OCI-LY7 (cell line): ENCODE measurements at regions of chr3 and their contacts with region 1.

Region 1: DNA sequence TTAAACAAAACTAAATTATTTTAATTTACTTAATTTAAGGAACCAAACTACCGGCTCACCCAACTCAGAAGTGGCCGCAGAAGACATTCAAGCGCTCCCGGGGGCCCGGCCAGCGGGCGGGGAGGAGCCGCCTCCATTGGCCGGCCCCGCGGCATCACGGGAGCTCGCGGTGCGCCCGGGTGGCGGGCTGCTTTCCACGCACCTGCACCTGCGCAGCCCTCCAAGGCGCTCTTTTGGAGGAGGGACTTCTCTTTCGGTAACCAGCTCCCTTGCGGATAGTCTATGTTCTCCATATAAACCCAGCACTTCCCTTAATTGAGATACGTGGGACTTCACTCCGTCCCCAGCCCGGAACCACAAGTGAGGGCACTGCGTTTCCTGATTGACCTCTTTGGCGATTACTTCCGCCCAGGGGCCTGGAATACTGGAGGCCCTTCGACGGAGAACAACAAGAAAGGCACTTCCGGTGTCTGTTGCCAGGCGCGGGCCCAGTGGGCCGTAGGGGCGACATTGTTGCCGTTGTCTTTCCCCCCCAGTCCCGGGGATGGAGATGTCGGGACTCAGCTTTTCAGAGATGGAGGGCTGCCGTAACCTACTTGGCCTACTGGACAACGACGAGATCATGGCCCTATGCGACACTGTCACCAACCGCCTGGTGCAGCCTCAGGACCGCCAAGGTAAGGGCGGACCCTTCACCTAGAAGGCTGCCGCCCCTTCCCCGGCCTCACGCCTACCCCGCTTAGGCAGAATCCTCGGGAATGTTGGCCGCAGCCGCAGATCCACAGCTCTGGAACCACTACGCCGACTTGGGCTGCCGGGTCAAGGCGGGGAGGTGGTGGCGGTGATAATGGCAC is at the start of gene C3orf38:
- DNase-seq: peak; percentile 88
- H3K4me3 ChIP-seq: peak within 1 kb of the TSS; percentile 99
- H3K27ac ChIP-seq: peak within 1 kb of the TSS; percentile 79
- H3K4me1 ChIP-seq: peaks cover 30% of the 10 kb centered on the region
- CTCF ChIP-seq: no peak
- total RNA-seq, gene C3orf38: 27.5 and 27.8 TPM in 2 replicates

Region 2: GRCh38 chr3:87227104-87227834 is 922.5 kb before region 1 on chr3 and contains the start of gene CHMP2B:
- CTCF ChIA-PET with region 1: no interaction called
- POLR2A ChIA-PET with region 1: no interaction called
- intact Hi-C with region 1: loop called (anchors 5 kb)
- DNase-seq: peak; percentile 93
- H3K4me3 ChIP-seq: peak within 1 kb of the TSS; percentile 98
- H3K27ac ChIP-seq: peak within 1 kb of the TSS; percentile 24
- H3K4me1 ChIP-seq: peaks cover 18% of the 10 kb centered on the region
- CTCF ChIP-seq: no peak
- total RNA-seq, gene CHMP2B: 11.5 and 17.5 TPM in 2 replicates

Region 3: DNA sequence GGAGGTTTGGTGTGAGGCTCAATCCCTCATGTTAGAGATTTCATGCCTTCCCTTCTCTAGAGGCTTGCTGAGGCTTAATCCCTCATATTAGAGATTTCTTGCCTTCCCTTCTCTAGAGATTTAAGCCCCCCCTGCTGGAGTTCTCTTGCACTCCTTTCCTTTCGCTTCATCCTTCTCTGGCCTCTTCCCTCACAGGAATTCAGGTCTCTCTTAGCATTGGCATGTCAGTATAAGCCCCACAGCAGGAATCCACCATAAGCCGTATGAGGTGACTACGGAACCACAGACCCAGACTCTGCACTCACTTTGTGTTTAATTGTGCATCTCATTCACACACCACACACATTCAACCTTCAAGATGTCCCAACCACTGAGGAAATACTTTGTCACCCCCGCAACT is 534.7 kb before region 1 on chr3:
- CTCF ChIA-PET with region 1: no interaction called
- POLR2A ChIA-PET with region 1: no interaction called
- intact Hi-C with region 1: no loop called
- DNase-seq: no peak
- H3K4me3 ChIP-seq: no peak overlapping the region
- H3K27ac ChIP-seq: no peak overlapping the region
- H3K4me1 ChIP-seq: no peaks in the 10 kb centered on the region
- CTCF ChIP-seq: no peak

Region 4: GRCh38 chr3:88058591-88059368 is 91.0 kb before region 1 on chr3 and contains the starts of genes CGGBP1 and ZNF654:
- CTCF ChIA-PET with region 1: no interaction called
- POLR2A ChIA-PET with region 1: interaction called, 20 read pairs
- intact Hi-C with region 1: loop called (anchors 1 kb)
- DNase-seq: peak; percentile 98
- H3K4me3 ChIP-seq: peak within 1 kb of the TSS; percentile 84
- H3K27ac ChIP-seq: peak within 1 kb of the TSS; percentile 68
- H3K4me1 ChIP-seq: peaks cover 29% of the 10 kb centered on the region
- CTCF ChIP-seq: no peak
- total RNA-seq, gene CGGBP1: 52.8 and 54.4 TPM in 2 replicates
- total RNA-seq, gene ZNF654: 5.4 and 5.6 TPM in 2 replicates

Region 5: DNA sequence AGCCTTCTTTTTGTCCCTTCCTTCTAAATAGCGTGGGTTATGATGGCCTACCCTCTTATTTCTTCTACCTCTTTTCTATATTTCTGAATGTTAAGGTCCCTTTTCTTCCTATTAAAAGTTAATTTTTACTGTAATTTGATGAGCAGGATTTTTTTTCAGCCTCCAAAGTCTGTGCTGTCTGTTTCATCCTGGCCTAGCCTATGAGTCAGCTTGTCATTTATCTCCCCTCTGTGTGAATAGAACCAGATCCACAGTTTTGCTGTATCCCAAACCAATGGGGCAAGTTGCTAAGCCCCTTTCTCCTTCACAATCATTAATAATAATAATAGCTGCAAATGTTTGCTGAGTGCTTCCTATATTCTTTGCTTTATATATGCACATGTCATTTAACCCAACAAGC is 18.0 kb before region 1 on chr3:
- CTCF ChIA-PET with region 1: no interaction called
- POLR2A ChIA-PET with region 1: interaction called, 13 read pairs
- intact Hi-C with region 1: no loop called
- DNase-seq: no peak
- H3K4me3 ChIP-seq: no peak overlapping the region
- H3K27ac ChIP-seq: no peak overlapping the region
- H3K4me1 ChIP-seq: no peaks in the 10 kb centered on the region
- CTCF ChIP-seq: no peak

Region 6: DNA sequence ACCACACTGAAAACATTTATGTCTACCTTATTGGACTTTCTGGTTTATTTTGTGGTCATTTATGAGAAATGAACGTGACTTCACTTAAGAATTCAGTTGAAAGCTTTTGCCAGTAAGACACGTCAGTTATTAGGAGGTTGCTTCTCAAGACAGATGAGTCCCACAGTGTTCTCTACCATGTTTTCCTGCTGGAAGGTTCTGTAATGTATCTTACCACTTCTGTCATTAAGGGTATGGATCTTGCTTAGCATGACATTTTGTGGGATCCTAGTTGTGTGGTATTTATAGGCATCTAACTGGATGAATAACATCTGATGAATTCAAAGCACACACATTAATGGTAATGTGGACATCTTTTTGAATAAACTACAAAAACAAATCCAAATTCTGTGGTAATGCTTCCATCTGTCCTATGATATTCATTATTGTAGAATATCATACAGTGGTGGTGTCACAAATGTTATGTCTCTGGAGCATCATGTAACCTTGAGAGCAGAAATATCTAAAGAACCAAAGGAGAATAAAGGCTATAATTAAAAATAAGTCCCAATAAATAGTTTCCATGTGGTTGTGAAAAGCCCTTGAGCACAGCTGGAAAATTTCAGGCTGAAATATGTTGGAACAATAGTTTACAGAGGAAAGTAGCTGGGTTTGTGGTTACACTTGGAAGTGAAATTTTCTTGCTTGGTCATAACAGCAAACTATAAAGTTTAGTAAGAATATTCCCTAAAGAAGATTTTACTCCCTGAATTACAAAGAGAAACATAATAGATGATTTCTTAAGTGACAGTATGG is 61.6 kb after region 1 on chr3:
- CTCF ChIA-PET with region 1: no interaction called
- POLR2A ChIA-PET with region 1: no interaction called
- intact Hi-C with region 1: no loop called
- DNase-seq: no peak
- H3K4me3 ChIP-seq: no peak overlapping the region
- H3K27ac ChIP-seq: no peak overlapping the region
- H3K4me1 ChIP-seq: no peaks in the 10 kb centered on the region
- CTCF ChIP-seq: no peak

Region 7: GRCh38 chr3:88433568-88433967 is 283.8 kb after region 1 on chr3:
- CTCF ChIA-PET with region 1: no interaction called
- POLR2A ChIA-PET with region 1: interaction called, 3 read pairs
- intact Hi-C with region 1: loop called (anchors 5 kb)
- DNase-seq: peak; percentile 96
- H3K4me3 ChIP-seq: peak overlapping the region; percentile 45
- H3K27ac ChIP-seq: peak overlapping the region; percentile 89
- H3K4me1 ChIP-seq: peaks cover 61% of the 10 kb centered on the region
- CTCF ChIP-seq: no peak